Mucosa of descending colon (tissue), 3 donors: ENCODE measurements at regions of chr14 and their contacts with region 1.

Region 1: DNA sequence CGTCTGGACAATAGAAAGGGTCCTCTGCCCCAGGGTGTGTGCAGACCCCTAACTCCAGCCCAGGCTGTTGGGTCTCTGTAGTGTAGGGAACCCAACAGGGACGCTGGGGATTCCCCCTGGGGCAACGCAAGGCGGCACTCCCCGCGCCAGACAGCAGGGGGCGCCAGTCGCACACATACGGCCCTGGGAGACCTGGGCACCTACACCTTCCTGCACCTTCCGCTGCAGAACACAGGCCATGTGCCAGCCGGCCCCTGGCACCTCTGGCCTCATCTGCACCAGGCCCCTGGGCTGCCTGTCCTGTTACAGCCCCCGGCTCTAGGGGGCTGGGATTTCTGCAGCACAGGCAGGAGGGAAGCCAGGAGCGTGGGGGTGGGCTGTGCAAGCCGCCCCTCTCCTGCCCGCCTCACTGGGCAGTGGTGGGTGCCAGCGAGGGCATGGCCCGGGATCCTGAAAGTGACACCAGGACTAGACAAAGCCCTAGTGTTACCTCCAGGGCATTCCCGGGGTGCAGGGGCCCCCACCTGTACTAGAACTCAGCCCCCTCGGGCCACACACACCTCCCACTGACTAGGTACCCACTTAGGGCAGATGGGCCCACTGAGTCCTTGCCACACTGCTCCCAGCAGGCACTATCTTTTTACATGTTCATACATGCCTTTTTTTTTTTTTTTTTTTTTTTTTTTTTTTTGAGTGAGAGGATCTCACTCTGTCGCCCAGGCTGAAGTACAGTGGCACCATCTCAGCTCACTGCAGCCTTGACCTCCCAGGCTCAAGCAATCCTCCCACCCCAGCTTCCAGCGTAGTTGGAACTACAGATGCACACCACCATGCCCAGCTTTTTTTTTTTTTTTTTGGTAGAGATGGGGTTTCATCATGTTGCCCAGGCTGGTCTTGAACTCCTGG is 37.5 kb downstream of the CCNK start:
- DNase-seq: peak; percentile 79 to 92 (median 91)
- ATAC-seq: peak; percentile 87
- H3K4me3 ChIP-seq: no peak overlapping the region
- H3K4me1 ChIP-seq: peaks cover 15% of the 10 kb centered on the region
- CTCF ChIP-seq: peak; percentile 97

Region 2: GRCh38 chr14:99118046-99118721 is 400.5 kb before region 1 on chr14:
- intact Hi-C with region 1: no loop called
- DNase-seq: no peak
- ATAC-seq: no peak
- H3K4me3 ChIP-seq: no peak overlapping the region
- H3K4me1 ChIP-seq: no peaks in the 10 kb centered on the region
- CTCF ChIP-seq: no peak

Region 3: GRCh38 chr14:99628832-99629618 is 110.3 kb after region 1 on chr14:
- intact Hi-C with region 1: loop called (anchors 2 kb)
- DNase-seq: peak; percentile 81 to 86 (median 85)
- ATAC-seq: peak; percentile 94
- H3K4me3 ChIP-seq: no peak overlapping the region
- H3K4me1 ChIP-seq: no peaks in the 10 kb centered on the region
- CTCF ChIP-seq: peak; percentile 98